ENCODE measurements at regions of chr17 and their contacts with region 1.

Region 1: GRCh38 chr17:35726127-35726952 is 5.1 kb upstream of the RASL10B start:
- DNase-seq: no peak
- ATAC-seq: no peak
- H3K4me3 ChIP-seq: no peak overlapping the region
- H3K4me3 Mint-ChIP-seq: no peak overlapping the region
- H3K27ac ChIP-seq: no peak overlapping the region
- H3K27ac Mint-ChIP-seq: no peak overlapping the region
- H3K4me1 ChIP-seq: peaks cover 13% of the 10 kb centered on the region
- H3K4me1 Mint-ChIP-seq: peaks cover 17% of the 10 kb centered on the region
- H3K27me3 ChIP-seq: no peaks in the 10 kb centered on the region
- H3K27me3 Mint-ChIP-seq: no peaks in the 10 kb centered on the region
- CTCF ChIP-seq: no peak

Region 2: DNA sequence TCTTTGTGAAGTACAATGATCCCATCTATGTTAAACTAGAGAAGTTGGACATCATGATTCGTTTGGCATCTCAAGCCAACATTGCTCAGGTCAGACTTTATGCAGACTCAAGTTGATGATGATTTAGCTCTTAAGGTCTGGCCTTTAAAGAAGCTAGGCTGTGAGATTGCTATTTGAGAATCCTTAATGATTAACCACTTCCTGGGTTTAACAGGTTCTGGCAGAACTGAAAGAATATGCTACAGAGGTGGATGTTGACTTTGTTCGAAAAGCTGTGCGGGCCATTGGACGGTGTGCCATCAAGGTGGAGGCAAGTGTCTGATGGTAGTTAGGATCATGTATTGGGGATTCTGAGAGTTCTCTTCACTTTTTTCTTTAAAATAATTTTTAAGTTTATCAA is 98.9 kb before region 1 on chr17:
- CTCF ChIA-PET with region 1: no interaction called
- POLR2A ChIA-PET with region 1: no interaction called
- intact Hi-C with region 1: no loop called
- DNase-seq: no peak
- ATAC-seq: no peak
- H3K4me3 ChIP-seq: no peak overlapping the region
- H3K4me3 Mint-ChIP-seq: no peak overlapping the region
- H3K27ac ChIP-seq: no peak overlapping the region
- H3K27ac Mint-ChIP-seq: no peak overlapping the region
- H3K4me1 ChIP-seq: no peaks in the 10 kb centered on the region
- H3K4me1 Mint-ChIP-seq: no peaks in the 10 kb centered on the region
- H3K27me3 ChIP-seq: no peaks in the 10 kb centered on the region
- H3K27me3 Mint-ChIP-seq: no peaks in the 10 kb centered on the region
- CTCF ChIP-seq: no peak

Region 3: DNA sequence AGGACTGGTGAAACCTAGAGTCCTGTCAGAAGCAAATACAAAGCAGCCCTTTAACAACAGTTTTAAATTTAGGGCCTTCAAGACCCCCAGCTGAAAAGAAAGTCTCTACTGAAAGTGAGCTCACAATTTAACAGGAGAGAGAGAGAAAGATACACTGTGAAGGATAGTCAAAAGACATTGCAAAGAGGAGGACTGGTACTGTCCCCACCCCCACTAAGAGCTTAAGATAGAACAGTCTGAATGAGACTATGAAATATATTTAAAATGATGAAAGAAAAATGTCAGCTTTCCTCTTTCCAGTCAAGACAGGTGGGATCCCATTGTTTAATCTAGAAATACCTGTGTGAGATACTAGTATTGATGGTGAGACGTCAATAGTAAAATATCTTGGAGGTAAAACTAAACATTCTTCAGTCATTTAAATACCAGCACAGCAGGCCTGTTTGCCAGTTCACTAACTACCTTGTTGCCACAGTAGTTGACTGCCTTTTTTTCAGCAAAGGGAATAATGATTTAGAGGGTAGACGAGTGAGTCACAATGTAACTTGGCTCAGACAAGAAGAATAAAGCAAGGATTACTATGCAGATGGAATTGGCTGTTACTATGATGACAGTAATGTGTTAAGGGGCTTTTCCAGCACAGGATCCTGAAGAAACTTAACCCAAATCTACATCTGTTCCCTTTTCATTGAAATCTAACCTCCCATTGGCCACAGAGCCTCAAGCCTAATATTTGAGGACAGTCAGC is 42.1 kb before region 1 on chr17:
- CTCF ChIA-PET with region 1: interaction called, 3 read pairs
- POLR2A ChIA-PET with region 1: no interaction called
- intact Hi-C with region 1: loop called in 1 of 2 experiments (anchors 5 kb)
- DNase-seq: no peak
- ATAC-seq: no peak
- H3K4me3 ChIP-seq: no peak overlapping the region
- H3K4me3 Mint-ChIP-seq: no peak overlapping the region
- H3K27ac ChIP-seq: no peak overlapping the region
- H3K27ac Mint-ChIP-seq: no peak overlapping the region
- H3K4me1 ChIP-seq: no peaks in the 10 kb centered on the region
- H3K4me1 Mint-ChIP-seq: peaks cover 2% of the 10 kb centered on the region
- H3K27me3 ChIP-seq: no peaks in the 10 kb centered on the region
- H3K27me3 Mint-ChIP-seq: no peaks in the 10 kb centered on the region
- CTCF ChIP-seq: no peak

Region 4: DNA sequence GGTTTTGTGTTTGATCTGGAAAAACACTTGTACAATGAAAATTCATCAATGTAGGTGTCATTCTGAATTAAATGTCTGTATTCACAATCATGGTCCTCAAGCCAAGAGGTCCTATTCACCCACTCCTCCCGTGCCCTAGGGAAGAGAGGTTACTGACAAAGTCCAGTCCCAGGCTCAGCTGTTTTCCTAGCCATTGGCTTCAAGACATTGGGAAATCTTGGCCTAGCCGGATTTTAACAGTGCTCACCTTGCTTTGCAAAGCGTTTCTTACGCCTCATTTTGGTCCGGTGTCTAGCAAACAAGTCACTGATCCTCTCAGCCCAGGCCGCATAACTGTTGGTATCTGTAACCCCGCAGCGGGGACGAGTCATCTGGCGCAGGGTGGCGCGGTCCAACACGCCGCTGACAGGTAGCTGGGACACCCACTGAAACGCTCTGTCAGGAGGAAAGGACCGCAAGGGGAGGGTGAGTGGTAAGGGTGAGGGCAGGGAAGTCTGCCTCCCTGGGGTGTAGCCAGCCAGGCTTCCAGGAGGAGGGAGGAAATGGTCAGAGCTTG is 52.4 kb after region 1 on chr17:
- CTCF ChIA-PET with region 1: no interaction called
- POLR2A ChIA-PET with region 1: no interaction called
- intact Hi-C with region 1: no loop called
- DNase-seq: no peak
- ATAC-seq: no peak
- H3K4me3 ChIP-seq: no peak overlapping the region
- H3K4me3 Mint-ChIP-seq: no peak overlapping the region
- H3K27ac ChIP-seq: no peak overlapping the region
- H3K27ac Mint-ChIP-seq: no peak overlapping the region
- H3K4me1 ChIP-seq: no peaks in the 10 kb centered on the region
- H3K4me1 Mint-ChIP-seq: peaks cover 3% of the 10 kb centered on the region
- H3K27me3 ChIP-seq: no peaks in the 10 kb centered on the region
- H3K27me3 Mint-ChIP-seq: peaks cover 4% of the 10 kb centered on the region
- CTCF ChIP-seq: no peak

Region 5: DNA sequence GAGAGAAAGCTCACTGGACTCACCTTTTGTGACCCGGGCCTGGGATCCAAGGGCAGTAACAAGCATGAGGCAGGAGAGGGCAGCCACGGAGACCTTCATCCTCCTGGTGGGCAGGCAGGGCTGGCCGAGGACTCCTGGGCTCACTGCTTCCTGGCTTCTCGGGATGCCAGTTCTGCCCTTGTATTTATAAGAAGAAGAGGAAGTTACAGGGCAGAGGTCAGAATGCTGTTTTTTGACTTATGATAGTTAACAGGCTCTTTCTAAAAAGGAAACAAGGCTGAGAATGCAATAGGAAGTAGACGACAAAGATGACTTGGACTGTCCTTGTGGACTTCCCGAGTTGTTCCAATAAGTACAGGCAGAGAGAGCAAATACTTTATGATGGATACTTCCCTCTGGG is 291.5 kb after region 1 on chr17 and contains the start of gene CCL23:
- CTCF ChIA-PET with region 1: no interaction called
- POLR2A ChIA-PET with region 1: no interaction called
- intact Hi-C with region 1: no loop called
- DNase-seq: no peak
- ATAC-seq: no peak
- H3K4me3 ChIP-seq: no peak within 1 kb of the TSS
- H3K4me3 Mint-ChIP-seq: no peak within 1 kb of the TSS
- H3K27ac ChIP-seq: no peak within 1 kb of the TSS
- H3K27ac Mint-ChIP-seq: no peak within 1 kb of the TSS
- H3K4me1 ChIP-seq: no peaks in the 10 kb centered on the region
- H3K4me1 Mint-ChIP-seq: no peaks in the 10 kb centered on the region
- H3K27me3 ChIP-seq: no peaks in the 10 kb centered on the region
- H3K27me3 Mint-ChIP-seq: peaks cover 13% of the 10 kb centered on the region
- CTCF ChIP-seq: no peak
- total RNA-seq, gene CCL23: not detected